Ascending aorta (tissue), 2 donors: ENCODE measurements at regions of chr20 and their contacts with region 1.

Region 1: DNA sequence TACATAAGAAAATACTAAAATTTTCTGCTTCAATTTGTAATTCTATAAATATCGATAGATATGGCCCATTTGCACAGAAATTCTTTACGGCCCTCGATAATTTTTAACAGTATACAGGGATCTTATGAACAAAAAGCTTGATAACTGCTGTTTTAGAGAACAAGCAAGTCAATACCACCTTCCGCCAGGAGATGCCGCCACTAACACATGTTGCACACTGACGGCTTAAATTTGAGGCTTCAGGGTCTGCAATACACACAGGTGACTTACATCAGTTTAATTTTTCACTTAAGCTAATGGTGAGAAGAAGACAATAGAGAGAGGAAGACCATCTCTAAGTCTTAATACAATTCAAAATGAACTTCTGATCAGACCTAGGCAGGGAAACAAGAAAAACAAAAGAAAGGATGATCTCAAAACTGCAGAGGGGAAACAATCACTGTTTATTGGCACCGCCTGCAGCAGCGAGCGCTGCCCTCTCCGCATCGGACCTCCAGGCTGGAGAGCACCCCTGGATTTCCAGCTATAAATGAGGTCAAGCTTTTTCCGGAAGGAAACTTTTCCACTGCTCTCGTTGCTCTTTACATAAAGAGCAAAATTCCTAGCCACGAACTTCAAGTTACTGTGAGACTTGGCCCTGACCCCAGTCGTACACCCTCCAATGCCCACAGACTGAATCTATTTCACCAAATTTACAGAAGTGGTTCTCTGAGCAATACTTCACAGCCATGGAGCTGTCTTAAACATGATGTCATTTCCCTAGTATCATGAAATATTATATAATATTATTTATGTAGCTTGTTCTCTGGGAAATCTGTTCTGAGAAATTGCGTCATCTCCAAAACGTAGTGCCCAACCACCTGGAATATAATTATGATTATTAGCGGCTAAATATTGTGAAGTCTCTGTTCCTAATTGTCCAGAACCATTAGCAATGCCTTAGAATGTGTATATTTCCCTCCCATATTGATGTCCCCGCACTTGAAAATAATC is 54.1 kb downstream of the OTOR start:
- DNase-seq: peak in 1 of 2 donors; percentile 76
- H3K4me3 ChIP-seq: no peak overlapping the region
- H3K27ac ChIP-seq: no peak overlapping the region
- H3K4me1 ChIP-seq: no peaks in the 10 kb centered on the region
- H3K27me3 ChIP-seq: no peaks in the 10 kb centered on the region
- CTCF ChIP-seq: peak; percentile 36 to 81 (median 77)

Region 2: GRCh38 chr20:16864069-16864468 is 61.9 kb after region 1 on chr20:
- intact Hi-C with region 1: no loop called
- DNase-seq: no peak
- H3K4me3 ChIP-seq: no peak overlapping the region
- H3K27ac ChIP-seq: no peak overlapping the region
- H3K4me1 ChIP-seq: no peaks in the 10 kb centered on the region
- H3K27me3 ChIP-seq: no peaks in the 10 kb centered on the region
- CTCF ChIP-seq: no peak

Region 3: GRCh38 chr20:16929756-16930155 is 127.5 kb after region 1 on chr20:
- intact Hi-C with region 1: no loop called
- DNase-seq: no peak
- H3K4me3 ChIP-seq: no peak overlapping the region
- H3K27ac ChIP-seq: no peak overlapping the region
- H3K4me1 ChIP-seq: no peaks in the 10 kb centered on the region
- H3K27me3 ChIP-seq: no peaks in the 10 kb centered on the region
- CTCF ChIP-seq: no peak

Region 4: GRCh38 chr20:17431621-17432364 is 629.6 kb after region 1 on chr20:
- intact Hi-C with region 1: loop called (anchors 1 kb)
- DNase-seq: no peak
- H3K4me3 ChIP-seq: no peak overlapping the region
- H3K27ac ChIP-seq: no peak overlapping the region
- H3K4me1 ChIP-seq: no peaks in the 10 kb centered on the region
- H3K27me3 ChIP-seq: no peaks in the 10 kb centered on the region
- CTCF ChIP-seq: peak; percentile 59 to 92 (median 85)